ENCODE measurements at regions of chr9 and their contacts with region 1.

Region 1: GRCh38 chr9:14030375-14031059 is 283.4 kb downstream of the NFIB start:
- DNase-seq: no peak
- ATAC-seq: peak in 3 of 4 donors; percentile 41 to 53 (median 47)
- H3K4me3 ChIP-seq: peak overlapping the region in 11 of 12 donors; percentile 23 to 52 (median 40)
- H3K27ac ChIP-seq: peak overlapping the region; percentile 82 to 92 (median 86)
- H3K4me1 ChIP-seq: peaks cover 0 to 64% (median 32%) of the 10 kb centered on the region in 12 donors
- H3K27me3 ChIP-seq: no peaks in the 10 kb centered on the region
- CTCF ChIP-seq: no peak
- POLR2A ChIP-seq: no peak

Region 2: GRCh38 chr9:13450723-13451122 is 579.8 kb before region 1 on chr9:
- intact Hi-C with region 1: loop called in 1 of 10 experiments (anchors 10 kb)
- DNase-seq: no peak
- ATAC-seq: peak in 1 of 4 donors; percentile 26
- H3K4me3 ChIP-seq: no peak overlapping the region
- H3K27ac ChIP-seq: no peak overlapping the region
- H3K4me1 ChIP-seq: peaks cover 0 to 47% (median 25%) of the 10 kb centered on the region in 12 donors
- H3K27me3 ChIP-seq: no peaks in the 10 kb centered on the region
- CTCF ChIP-seq: no peak
- POLR2A ChIP-seq: no peak

Region 3: GRCh38 chr9:13898957-13899356 is 131.6 kb before region 1 on chr9:
- intact Hi-C with region 1: loop called in 3 of 10 experiments (anchors 2 to 10 kb)
- DNase-seq: peak in 4 of 5 donors; percentile 30 to 44 (median 36)
- ATAC-seq: no peak
- H3K4me3 ChIP-seq: no peak overlapping the region
- H3K27ac ChIP-seq: peak overlapping the region in 11 of 12 donors; percentile 42 to 84 (median 66)
- H3K4me1 ChIP-seq: peaks cover 6 to 66% (median 24%) of the 10 kb centered on the region in 12 donors
- H3K27me3 ChIP-seq: no peaks in the 10 kb centered on the region
- CTCF ChIP-seq: no peak
- POLR2A ChIP-seq: no peak

Region 4: GRCh38 chr9:14089051-14089803 is 58.7 kb after region 1 on chr9:
- intact Hi-C with region 1: loop called in 2 of 10 experiments (anchors 5 to 10 kb)
- DNase-seq: no peak
- ATAC-seq: peak in 1 of 4 donors; percentile 16
- H3K4me3 ChIP-seq: no peak overlapping the region
- H3K27ac ChIP-seq: no peak overlapping the region
- H3K4me1 ChIP-seq: peaks cover 0 to 34% (median 18%) of the 10 kb centered on the region in 12 donors
- H3K27me3 ChIP-seq: no peaks in the 10 kb centered on the region
- CTCF ChIP-seq: no peak
- POLR2A ChIP-seq: no peak

Region 5: GRCh38 chr9:14309403-14309802 is 278.9 kb after region 1 on chr9:
- intact Hi-C with region 1: loop called in 5 of 10 experiments (anchors 2 to 10 kb)
- DNase-seq: no peak
- ATAC-seq: peak; percentile 11 to 38 (median 25)
- H3K4me3 ChIP-seq: peak overlapping the region; percentile 5 to 90 (median 80)
- H3K27ac ChIP-seq: peak overlapping the region; percentile 51 to 100 (median 80)
- H3K4me1 ChIP-seq: peaks cover 0 to 59% (median 44%) of the 10 kb centered on the region in 12 donors
- H3K27me3 ChIP-seq: peaks cover 0 to 29% (median 0%) of the 10 kb centered on the region in 9 donors
- CTCF ChIP-seq: no peak
- POLR2A ChIP-seq: no peak

Region 6: GRCh38 chr9:14347406-14348122 is 317.0 kb after region 1 on chr9:
- intact Hi-C with region 1: loop called in 2 of 10 experiments (anchors 5 to 10 kb)
- DNase-seq: peak; percentile 63 to 76 (median 69)
- ATAC-seq: peak; percentile 36 to 59 (median 50)
- H3K4me3 ChIP-seq: peak overlapping the region; percentile 41 to 72 (median 59)
- H3K27ac ChIP-seq: peak overlapping the region; percentile 76 to 94 (median 87)
- H3K4me1 ChIP-seq: peaks cover 11 to 73% (median 42%) of the 10 kb centered on the region in 12 donors
- H3K27me3 ChIP-seq: peaks cover 0 to 50% (median 0%) of the 10 kb centered on the region in 9 donors
- CTCF ChIP-seq: peak in 3 of 12 donors; percentile 19 to 52 (median 52)
- POLR2A ChIP-seq: peak in 1 of 2 donors; percentile 52